Activated T-helper 1 cell treated with anti-CD3 and anti-CD28 coated beads, Interleukin-12 subunit alpha, Interleukin-12 subunit beta, Interleukin-2, Interleukin-4 antibody, amounts not matched to agents 30 ng/mL and 10 ng/mL and 1 ng/mL, durations not matched to agents 14 hours and 24 hours and 36 hours (primary cell): ENCODE measurements at regions of chr5 and their contacts with region 1.

Region 1: DNA sequence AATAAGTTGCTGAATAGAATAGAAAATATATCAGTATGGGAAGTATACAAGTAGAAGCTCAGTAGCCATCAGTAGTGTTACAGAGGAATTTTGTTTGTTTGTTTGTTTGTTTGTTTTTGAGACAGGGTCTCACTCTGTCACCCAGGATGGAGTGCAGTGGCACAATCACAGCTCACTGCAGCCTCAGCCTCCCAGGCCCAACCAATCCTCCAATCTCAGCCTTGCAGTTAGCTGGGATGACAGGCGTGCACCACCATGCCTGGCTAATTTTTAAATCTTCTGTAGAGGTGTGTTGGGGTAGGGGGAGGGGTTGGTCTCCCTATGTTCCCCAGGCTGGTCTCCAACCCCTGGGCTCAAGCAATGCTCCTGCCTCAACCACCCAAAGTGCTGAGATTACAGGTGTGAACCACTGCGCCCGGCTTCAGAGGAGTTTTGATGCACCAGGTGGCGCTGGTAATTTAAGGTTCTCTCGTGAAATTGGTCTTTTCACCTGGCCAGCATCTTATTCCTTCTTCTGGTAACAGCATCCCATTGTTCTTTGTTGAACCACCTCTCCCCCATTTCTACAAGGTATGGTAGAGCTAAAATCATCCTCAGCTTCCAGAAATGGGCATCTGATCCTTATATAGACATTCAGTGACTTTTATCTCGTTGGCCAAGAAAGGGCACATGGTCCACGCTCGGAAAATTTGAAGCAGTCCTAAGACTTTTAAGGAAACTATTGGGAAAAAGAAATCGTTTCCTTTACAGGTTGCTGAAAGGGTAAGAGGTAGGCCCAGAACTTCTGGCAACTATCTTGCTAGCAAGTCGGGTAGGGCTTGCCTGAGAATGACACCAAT is 157.1 kb downstream of the ARRDC3 start:
- DNase-seq: peak; percentile 33
- H3K4me3 Mint-ChIP-seq: no peak overlapping the region
- H3K27ac Mint-ChIP-seq: no peak overlapping the region
- H3K4me1 Mint-ChIP-seq: peaks cover 6% of the 10 kb centered on the region
- H3K27me3 Mint-ChIP-seq: peaks cover 20% of the 10 kb centered on the region

Region 2: GRCh38 chr5:90932052-90932699 is 293.9 kb before region 1 on chr5:
- intact Hi-C with region 1: loop called (anchors 5 kb)
- DNase-seq: no peak
- H3K4me3 Mint-ChIP-seq: no peak overlapping the region
- H3K27ac Mint-ChIP-seq: no peak overlapping the region
- H3K4me1 Mint-ChIP-seq: peaks cover 5% of the 10 kb centered on the region
- H3K27me3 Mint-ChIP-seq: peaks cover 6% of the 10 kb centered on the region

Region 3: DNA sequence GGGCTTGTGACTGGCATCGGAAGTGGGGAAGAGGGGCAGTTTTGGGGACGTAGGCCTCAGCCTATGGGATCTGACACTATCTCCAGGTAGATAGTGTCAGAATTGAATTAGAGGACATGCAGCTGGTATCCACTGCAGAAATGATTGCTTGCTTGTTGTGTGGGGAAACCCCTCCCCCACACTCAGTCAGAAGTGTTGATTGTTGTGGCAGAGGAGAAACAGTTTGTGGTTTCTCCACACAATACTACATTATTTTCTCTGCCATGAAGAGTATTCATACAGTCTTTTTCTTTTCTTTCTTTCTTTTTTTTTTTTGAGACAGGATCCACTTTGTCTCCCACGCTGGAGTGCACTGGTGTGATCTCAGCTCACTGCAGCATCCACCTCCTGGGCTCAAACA is 43.1 kb after region 1 on chr5:
- intact Hi-C with region 1: loop called (anchors 2 kb)
- DNase-seq: peak; percentile 41
- H3K4me3 Mint-ChIP-seq: no peak overlapping the region
- H3K27ac Mint-ChIP-seq: peak overlapping the region; percentile 49
- H3K4me1 Mint-ChIP-seq: peaks cover 40% of the 10 kb centered on the region
- H3K27me3 Mint-ChIP-seq: peaks cover 17% of the 10 kb centered on the region

Region 4: GRCh38 chr5:91311697-91312501 is 85.8 kb after region 1 on chr5:
- intact Hi-C with region 1: loop called (anchors 1 kb)
- DNase-seq: peak; percentile 60
- H3K4me3 Mint-ChIP-seq: peak overlapping the region; percentile 77
- H3K27ac Mint-ChIP-seq: peak overlapping the region; percentile 87
- H3K4me1 Mint-ChIP-seq: peaks cover 46% of the 10 kb centered on the region
- H3K27me3 Mint-ChIP-seq: no peaks in the 10 kb centered on the region

Region 5: GRCh38 chr5:91419571-91420537 is 193.8 kb after region 1 on chr5:
- intact Hi-C with region 1: loop called (anchors 1 kb)
- DNase-seq: peak; percentile 40
- H3K4me3 Mint-ChIP-seq: no peak overlapping the region
- H3K27ac Mint-ChIP-seq: no peak overlapping the region
- H3K4me1 Mint-ChIP-seq: peaks cover 4% of the 10 kb centered on the region
- H3K27me3 Mint-ChIP-seq: peaks cover under 1% of the 10 kb centered on the region